ENCODE measurements at regions of chr1 and their contacts with region 1.

Region 1: DNA sequence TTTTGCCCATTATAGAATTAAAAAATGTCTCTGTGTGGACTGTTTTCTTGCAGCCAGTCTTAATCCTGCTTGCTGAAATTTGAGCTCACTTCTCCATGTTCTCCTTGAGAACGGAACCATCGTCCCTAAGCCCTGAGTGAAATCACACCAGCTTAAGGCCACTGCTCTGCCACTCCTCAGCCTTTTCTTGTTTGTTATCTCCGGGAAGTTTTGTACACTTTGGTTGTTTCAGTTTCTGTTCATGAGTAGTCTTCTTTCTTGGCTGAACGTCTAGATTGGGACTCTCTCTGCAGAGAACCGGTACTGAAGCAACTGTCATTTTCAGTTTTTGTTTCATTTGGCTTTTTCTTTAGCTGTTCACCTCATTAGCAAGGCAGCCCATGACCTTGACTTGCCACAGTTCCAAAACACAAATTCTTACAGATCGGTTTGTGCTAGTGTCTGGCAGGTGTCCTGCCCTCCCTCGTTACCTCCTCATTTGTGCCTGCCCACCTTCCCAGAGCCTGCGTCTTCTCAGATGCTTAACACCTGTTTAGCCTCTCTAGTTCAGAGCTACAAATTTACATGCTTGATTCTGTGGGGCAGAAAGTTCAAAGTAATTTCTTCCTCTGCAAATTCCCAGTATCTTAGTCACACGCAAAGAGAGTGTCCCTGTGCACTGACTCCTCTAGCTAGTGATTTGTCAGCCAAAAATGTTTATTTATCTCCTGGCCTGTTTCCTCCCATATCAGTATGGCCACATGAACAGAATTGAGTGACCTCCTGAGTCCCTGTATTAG is 12.4 kb downstream of the PSEN2 start:
- DNase-seq: peak; percentile 40
- H3K4me3 Mint-ChIP-seq: peak overlapping the region; percentile 54
- H3K27ac Mint-ChIP-seq: peak overlapping the region; percentile 87
- H3K4me1 Mint-ChIP-seq: peaks cover 58% of the 10 kb centered on the region
- H3K27me3 Mint-ChIP-seq: no peaks in the 10 kb centered on the region

Region 2: GRCh38 chr1:226626577-226626956 is 256.3 kb before region 1 on chr1:
- CTCF ChIA-PET with region 1: interaction called, 14 read pairs
- POLR2A ChIA-PET with region 1: interaction called, 9 read pairs
- DNase-seq: peak; percentile 82
- H3K4me3 Mint-ChIP-seq: no peak overlapping the region
- H3K27ac Mint-ChIP-seq: no peak overlapping the region
- H3K4me1 Mint-ChIP-seq: peaks cover 17% of the 10 kb centered on the region
- H3K27me3 Mint-ChIP-seq: peaks cover 3% of the 10 kb centered on the region

Region 3: GRCh38 chr1:226687426-226687825 is 195.4 kb before region 1 on chr1:
- CTCF ChIA-PET with region 1: no interaction called
- POLR2A ChIA-PET with region 1: no interaction called
- DNase-seq: peak; percentile 47
- H3K4me3 Mint-ChIP-seq: no peak overlapping the region
- H3K27ac Mint-ChIP-seq: no peak overlapping the region
- H3K4me1 Mint-ChIP-seq: peaks cover 87% of the 10 kb centered on the region
- H3K27me3 Mint-ChIP-seq: no peaks in the 10 kb centered on the region

Region 4: GRCh38 chr1:226870401-226871279 is 12.2 kb before region 1 on chr1 and contains the start of gene PSEN2:
- CTCF ChIA-PET with region 1: interaction called, 3 read pairs
- POLR2A ChIA-PET with region 1: interaction called, 31 read pairs
- DNase-seq: peak; percentile 69
- H3K4me3 Mint-ChIP-seq: peak within 1 kb of the TSS; percentile 75
- H3K27ac Mint-ChIP-seq: no peak within 1 kb of the TSS
- H3K4me1 Mint-ChIP-seq: peaks cover 15% of the 10 kb centered on the region
- H3K27me3 Mint-ChIP-seq: peaks cover 10% of the 10 kb centered on the region
- total RNA-seq, gene PSEN2: 4.5 to 4.9 TPM

Region 5: DNA sequence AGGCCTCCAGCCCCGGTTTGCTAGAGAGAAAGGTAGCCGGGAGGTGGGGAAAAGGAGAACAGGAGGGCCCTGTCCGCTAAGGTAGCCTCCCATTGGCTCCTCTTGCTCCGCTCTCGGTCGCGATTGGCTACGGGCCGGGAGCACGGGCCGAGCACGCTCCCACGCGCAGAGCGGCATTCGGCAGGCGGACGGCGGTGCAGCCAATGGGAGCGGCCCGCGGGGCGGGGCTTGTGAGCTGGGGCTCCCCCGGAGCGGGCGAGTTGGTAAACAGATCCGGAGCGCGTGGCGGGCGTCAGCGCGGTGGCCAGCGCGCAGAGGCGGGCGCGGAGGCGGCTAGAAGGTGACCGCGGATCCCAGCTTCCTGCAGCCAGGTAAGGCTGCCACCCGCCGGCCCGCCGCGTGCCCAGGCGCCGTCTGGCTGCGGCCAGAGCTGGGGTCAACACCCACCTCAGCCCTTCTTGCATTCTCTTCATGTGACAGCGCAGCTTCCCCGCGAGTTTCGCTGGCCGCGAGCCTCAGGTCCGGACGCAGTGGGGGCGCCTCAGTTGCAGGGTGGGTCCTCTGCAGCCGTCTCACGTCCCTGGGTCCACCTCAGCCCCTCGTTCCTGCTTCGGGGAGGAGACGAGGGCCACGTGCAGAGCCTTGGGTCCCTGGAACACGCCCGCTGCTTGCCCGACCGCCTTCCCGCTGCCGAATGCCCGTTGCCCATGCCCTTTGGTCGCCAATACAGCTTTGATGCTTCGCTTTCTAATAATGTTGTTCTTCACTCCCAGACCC is 57.4 kb after region 1 on chr1 and contains the start of gene COQ8A:
- CTCF ChIA-PET with region 1: interaction called, 4 read pairs
- POLR2A ChIA-PET with region 1: interaction called, 82 read pairs
- DNase-seq: peak; percentile 99
- H3K4me3 Mint-ChIP-seq: peak within 1 kb of the TSS; percentile 76
- H3K27ac Mint-ChIP-seq: peak within 1 kb of the TSS; percentile 96
- H3K4me1 Mint-ChIP-seq: peaks cover 33% of the 10 kb centered on the region
- H3K27me3 Mint-ChIP-seq: peaks cover 3% of the 10 kb centered on the region
- total RNA-seq, gene COQ8A: 18.1 to 18.5 TPM

Region 6: GRCh38 chr1:226984521-226985238 is 101.9 kb after region 1 on chr1:
- CTCF ChIA-PET with region 1: no interaction called
- POLR2A ChIA-PET with region 1: no interaction called
- DNase-seq: no peak
- H3K4me3 Mint-ChIP-seq: no peak overlapping the region
- H3K27ac Mint-ChIP-seq: no peak overlapping the region
- H3K4me1 Mint-ChIP-seq: peaks cover 9% of the 10 kb centered on the region
- H3K27me3 Mint-ChIP-seq: no peaks in the 10 kb centered on the region